ENCODE measurements at regions of chr16 and their contacts with region 1.

Region 1: GRCh38 chr16:56700195-56700594 is 17.9 kb downstream of the MT1X start:
- DNase-seq: no peak
- ATAC-seq: no peak
- H3K4me3 Mint-ChIP-seq: no peak overlapping the region
- H3K27ac Mint-ChIP-seq: no peak overlapping the region
- H3K4me1 Mint-ChIP-seq: peaks cover 11% of the 10 kb centered on the region
- H3K27me3 Mint-ChIP-seq: no peaks in the 10 kb centered on the region

Region 2: DNA sequence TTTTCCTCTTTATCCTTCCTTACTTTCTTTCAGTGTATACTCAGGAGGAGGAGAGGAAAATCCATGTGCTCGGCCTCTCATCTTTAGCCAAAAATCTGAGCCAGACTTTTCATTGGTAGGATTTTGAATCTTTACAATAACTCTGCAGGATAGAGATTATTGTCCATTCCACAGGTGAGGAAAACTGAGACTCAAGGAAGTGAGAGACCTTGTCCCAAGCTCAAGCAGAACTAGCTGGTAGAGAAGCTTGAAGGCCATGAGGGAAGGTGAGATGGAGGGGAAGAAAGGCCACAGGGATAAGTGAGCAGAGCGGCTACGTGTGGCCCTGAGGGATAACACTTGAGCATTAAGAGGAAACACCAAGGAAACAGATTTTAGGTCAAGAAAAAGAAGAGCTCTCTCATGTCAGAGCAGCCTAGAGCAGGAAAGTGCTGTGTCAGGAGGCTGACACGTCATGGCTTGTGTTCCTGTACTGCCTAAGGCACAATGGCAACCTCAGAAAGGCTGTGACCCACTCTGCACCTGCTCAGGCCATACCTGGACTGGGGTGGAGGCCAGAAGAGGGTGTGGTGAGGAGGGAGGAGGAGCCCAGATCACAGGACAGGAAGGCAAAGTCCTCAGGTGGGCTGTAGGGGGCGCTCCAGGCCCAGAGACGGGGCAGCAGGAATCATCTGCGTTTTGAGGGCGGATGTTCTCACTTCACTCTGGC is 123.5 kb before region 1 on chr16:
- CTCF ChIA-PET with region 1: interaction called, 94 read pairs
- DNase-seq: peak; percentile 92
- ATAC-seq: peak; percentile 100
- H3K4me3 Mint-ChIP-seq: no peak overlapping the region
- H3K27ac Mint-ChIP-seq: no peak overlapping the region
- H3K4me1 Mint-ChIP-seq: peaks cover 8% of the 10 kb centered on the region
- H3K27me3 Mint-ChIP-seq: peaks cover 17% of the 10 kb centered on the region

Region 3: DNA sequence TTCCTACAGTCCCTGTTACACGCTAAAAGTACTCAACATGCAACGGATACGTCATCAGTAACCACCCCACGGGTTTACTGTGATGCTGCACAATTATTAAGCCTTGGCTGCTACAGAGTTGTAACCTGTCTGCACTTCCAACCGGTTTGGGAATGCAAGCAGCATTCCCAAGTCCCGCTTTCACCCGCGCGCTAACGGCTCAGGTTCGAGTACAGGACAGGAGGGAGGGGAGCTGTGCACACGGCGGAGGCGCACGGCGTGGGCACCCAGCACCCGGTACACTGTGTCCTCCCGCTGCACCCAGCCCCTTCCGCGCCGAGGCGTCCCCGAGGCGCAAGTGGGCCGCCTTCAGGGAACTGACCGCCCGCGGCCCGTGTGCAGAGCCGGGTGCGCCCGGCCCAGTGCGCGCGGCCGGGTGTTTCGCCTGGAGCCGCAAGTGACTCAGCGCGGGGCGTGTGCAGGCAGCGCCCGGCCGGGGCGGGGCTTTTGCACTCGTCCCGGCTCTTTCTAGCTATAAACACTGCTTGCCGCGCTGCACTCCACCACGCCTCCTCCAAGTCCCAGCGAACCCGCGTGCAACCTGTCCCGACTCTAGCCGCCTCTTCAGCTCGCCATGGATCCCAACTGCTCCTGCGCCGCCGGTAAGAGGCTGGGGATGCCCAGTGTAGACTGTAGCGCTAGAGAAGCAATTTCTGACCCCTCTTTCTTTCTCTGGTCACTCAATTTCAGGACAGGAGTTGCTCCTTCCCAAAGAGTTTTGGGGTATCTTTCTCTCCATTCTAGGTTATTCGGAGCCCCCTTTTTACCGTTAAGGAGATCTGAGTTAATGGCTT is 91.9 kb before region 1 on chr16 and contains the start of gene MT2A:
- CTCF ChIA-PET with region 1: interaction called, 10 read pairs
- DNase-seq: peak; percentile 96
- ATAC-seq: peak; percentile 93
- H3K4me3 Mint-ChIP-seq: peak within 1 kb of the TSS; percentile 95
- H3K27ac Mint-ChIP-seq: peak within 1 kb of the TSS; percentile 94
- H3K4me1 Mint-ChIP-seq: peaks cover 50% of the 10 kb centered on the region
- H3K27me3 Mint-ChIP-seq: no peaks in the 10 kb centered on the region
- total RNA-seq, gene MT2A: 121 to 125 TPM

Region 4: DNA sequence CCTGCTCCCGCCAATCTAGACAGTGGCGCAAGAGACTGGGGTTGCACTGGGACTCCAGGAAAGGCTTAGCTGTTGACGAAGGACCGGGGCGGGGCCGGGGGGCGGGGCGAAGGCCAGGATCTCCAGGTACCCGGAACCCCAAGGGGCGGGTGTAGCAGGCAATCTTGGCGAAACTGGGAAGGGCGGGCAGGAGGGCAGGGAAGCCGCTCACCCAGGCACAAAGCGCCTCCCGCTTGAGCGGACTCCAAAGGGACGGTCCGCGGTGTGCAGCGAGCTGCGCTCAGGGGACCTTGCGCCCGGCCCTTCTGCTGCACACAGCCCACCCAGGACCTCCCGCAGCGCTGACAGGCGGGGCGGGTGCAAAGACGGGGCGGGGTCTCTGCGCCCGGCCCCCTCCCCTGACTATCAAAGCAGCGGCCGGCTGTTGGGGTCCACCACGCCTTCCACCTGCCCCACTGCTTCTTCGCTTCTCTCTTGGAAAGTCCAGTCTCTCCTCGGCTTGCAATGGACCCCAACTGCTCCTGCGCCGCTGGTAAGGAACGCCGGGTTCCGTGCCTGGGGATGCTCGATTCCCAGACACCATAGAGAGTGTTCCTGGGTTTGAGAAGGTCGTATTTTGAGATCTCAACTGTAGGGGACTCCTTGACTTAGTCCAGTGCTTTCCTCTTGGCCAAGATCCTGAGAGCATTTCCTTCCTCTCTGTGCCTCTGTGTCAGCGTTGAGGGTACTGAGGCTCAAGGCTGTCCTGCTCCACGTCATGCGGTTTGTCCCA is 42.5 kb before region 1 on chr16 and contains the start of gene MT1F:
- CTCF ChIA-PET with region 1: interaction called, 10 read pairs
- DNase-seq: peak; percentile 87
- ATAC-seq: peak; percentile 91
- H3K4me3 Mint-ChIP-seq: peak within 1 kb of the TSS; percentile 90
- H3K27ac Mint-ChIP-seq: peak within 1 kb of the TSS; percentile 88
- H3K4me1 Mint-ChIP-seq: peaks cover 27% of the 10 kb centered on the region
- H3K27me3 Mint-ChIP-seq: peaks cover 9% of the 10 kb centered on the region
- total RNA-seq, gene MT1F: 11.4 to 20.6 TPM

Region 5: GRCh38 chr16:56689171-56689570 is 11.0 kb before region 1 on chr16:
- CTCF ChIA-PET with region 1: interaction called, 30 read pairs
- DNase-seq: no peak
- ATAC-seq: no peak
- H3K4me3 Mint-ChIP-seq: no peak overlapping the region
- H3K27ac Mint-ChIP-seq: no peak overlapping the region
- H3K4me1 Mint-ChIP-seq: peaks cover 1% of the 10 kb centered on the region
- H3K27me3 Mint-ChIP-seq: peaks cover 7% of the 10 kb centered on the region

Region 6: DNA sequence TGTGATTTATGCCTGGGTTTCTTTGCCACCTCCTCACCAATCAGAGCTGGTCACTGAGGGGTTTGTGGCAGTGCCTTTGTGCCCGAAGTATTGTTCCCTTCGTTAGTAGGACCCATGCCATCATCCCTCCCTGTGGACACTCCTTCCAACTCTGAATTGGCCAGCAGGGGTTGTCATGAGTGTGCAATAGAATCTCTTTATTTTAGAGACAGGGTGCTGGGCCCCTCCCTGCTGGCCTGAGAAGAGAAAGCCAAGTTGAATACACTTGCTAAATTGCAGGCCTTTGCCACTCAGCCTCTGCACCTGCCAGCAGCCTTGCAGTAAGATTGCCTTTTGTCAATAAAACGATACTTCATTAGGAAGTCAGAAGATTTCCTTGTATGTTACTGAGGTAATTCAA is 124.1 kb after region 1 on chr16:
- CTCF ChIA-PET with region 1: no interaction called
- DNase-seq: no peak
- ATAC-seq: peak; percentile 33
- H3K4me3 Mint-ChIP-seq: no peak overlapping the region
- H3K27ac Mint-ChIP-seq: no peak overlapping the region
- H3K4me1 Mint-ChIP-seq: no peaks in the 10 kb centered on the region
- H3K27me3 Mint-ChIP-seq: no peaks in the 10 kb centered on the region

Region 7: GRCh38 chr16:56841233-56841632 is 141.0 kb after region 1 on chr16:
- CTCF ChIA-PET with region 1: no interaction called
- DNase-seq: no peak
- ATAC-seq: no peak
- H3K4me3 Mint-ChIP-seq: no peak overlapping the region
- H3K27ac Mint-ChIP-seq: peak overlapping the region; percentile 5
- H3K4me1 Mint-ChIP-seq: no peaks in the 10 kb centered on the region
- H3K27me3 Mint-ChIP-seq: no peaks in the 10 kb centered on the region

Region 8: GRCh38 chr16:56970934-56971767 is 271.0 kb after region 1 on chr16:
- CTCF ChIA-PET with region 1: no interaction called
- DNase-seq: no peak
- ATAC-seq: no peak
- H3K4me3 Mint-ChIP-seq: no peak overlapping the region
- H3K27ac Mint-ChIP-seq: no peak overlapping the region
- H3K4me1 Mint-ChIP-seq: peaks cover 10% of the 10 kb centered on the region
- H3K27me3 Mint-ChIP-seq: no peaks in the 10 kb centered on the region